CD8-positive, alpha-beta memory T cell (primary cell): ENCODE measurements at regions of chr1 and their contacts with region 1.

Region 1: GRCh38 chr1:169893494-169894362 is at the start of gene SCYL3:
- DNase-seq: peak; percentile 79 to 97 (median 94)
- H3K4me3 ChIP-seq: peak within 1 kb of the TSS; percentile 76
- H3K4me3 Mint-ChIP-seq: peak within 1 kb of the TSS; percentile 82 to 98 (median 91)
- H3K27ac ChIP-seq: peak within 1 kb of the TSS; percentile 96
- H3K27ac Mint-ChIP-seq: peak within 1 kb of the TSS; percentile 99 to 100 (median 99)
- H3K4me1 ChIP-seq: peaks cover 32% of the 10 kb centered on the region
- H3K4me1 Mint-ChIP-seq: peaks cover 44 to 54% (median 51%) of the 10 kb centered on the region in 3 donors
- H3K27me3 ChIP-seq: no peaks in the 10 kb centered on the region
- H3K27me3 Mint-ChIP-seq: peaks cover 4 to 17% of the 10 kb centered on the region in 2 donors
- total RNA-seq, gene SCYL3: 12.7 to 13.1 TPM

Region 2: GRCh38 chr1:169001353-169001752 is 892.4 kb before region 1 on chr1:
- CTCF ChIA-PET with region 1: no interaction called
- POLR2A ChIA-PET with region 1: no interaction called
- DNase-seq: no peak
- H3K4me3 ChIP-seq: no peak overlapping the region
- H3K4me3 Mint-ChIP-seq: no peak overlapping the region
- H3K27ac ChIP-seq: no peak overlapping the region
- H3K27ac Mint-ChIP-seq: no peak overlapping the region
- H3K4me1 ChIP-seq: no peaks in the 10 kb centered on the region
- H3K4me1 Mint-ChIP-seq: no peaks in the 10 kb centered on the region
- H3K27me3 ChIP-seq: no peaks in the 10 kb centered on the region
- H3K27me3 Mint-ChIP-seq: peaks cover 0 to 5% of the 10 kb centered on the region in 2 donors

Region 3: DNA sequence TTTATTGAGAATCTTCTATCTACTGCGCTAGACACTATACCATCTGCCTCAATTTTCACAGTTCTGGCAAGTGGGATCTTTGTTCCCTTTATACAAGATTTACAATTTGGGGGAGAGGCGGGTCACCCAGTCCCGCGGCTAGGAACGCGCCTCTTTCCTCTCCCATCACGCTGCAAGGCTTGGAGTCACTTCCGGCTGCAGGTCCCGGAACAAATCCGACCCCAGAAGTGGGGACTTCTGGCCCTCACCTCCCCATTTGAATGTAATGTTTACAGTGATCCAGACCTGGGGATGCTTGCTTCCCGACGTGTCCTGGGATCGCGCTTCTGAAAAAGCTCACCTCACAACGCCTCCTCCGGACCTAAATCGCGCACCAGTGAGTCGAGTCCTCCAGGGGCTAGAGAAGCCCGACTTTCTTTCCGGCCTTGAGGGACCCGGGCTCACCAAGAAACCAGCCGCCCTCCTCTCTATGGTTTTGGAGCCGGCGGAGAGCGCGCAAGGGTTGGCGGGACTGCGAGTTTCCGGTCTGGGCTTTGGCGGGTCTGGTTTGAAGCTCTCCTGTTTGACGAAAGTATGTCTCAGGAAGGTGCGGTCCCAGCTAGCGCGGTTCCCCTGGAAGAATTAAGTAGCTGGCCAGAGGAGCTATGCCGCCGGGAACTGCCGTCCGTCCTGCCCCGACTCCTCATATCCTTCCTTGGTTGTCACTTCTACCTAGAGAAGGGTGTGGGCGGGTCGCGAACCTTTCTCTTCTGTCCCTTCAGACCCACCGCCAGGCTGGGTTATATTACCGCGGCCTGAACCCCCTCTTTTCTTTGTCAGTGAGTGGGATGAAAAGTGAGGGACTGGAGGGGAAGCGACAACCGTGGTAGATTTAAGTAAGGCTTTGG is 99.0 kb before region 1 on chr1 and contains the start of gene METTL18:
- CTCF ChIA-PET with region 1: interaction called, 4 read pairs
- POLR2A ChIA-PET with region 1: interaction called, 12 read pairs
- DNase-seq: peak; percentile 81 to 94 (median 92)
- H3K4me3 ChIP-seq: peak within 1 kb of the TSS; percentile 98
- H3K4me3 Mint-ChIP-seq: peak within 1 kb of the TSS; percentile 94 to 100 (median 100)
- H3K27ac ChIP-seq: peak within 1 kb of the TSS; percentile 89
- H3K27ac Mint-ChIP-seq: peak within 1 kb of the TSS; percentile 87 to 100 (median 99)
- H3K4me1 ChIP-seq: peaks cover 26% of the 10 kb centered on the region
- H3K4me1 Mint-ChIP-seq: peaks cover 47 to 61% (median 60%) of the 10 kb centered on the region in 3 donors
- H3K27me3 ChIP-seq: no peaks in the 10 kb centered on the region
- H3K27me3 Mint-ChIP-seq: no peaks in the 10 kb centered on the region
- total RNA-seq, gene METTL18: 14.5 to 16.2 TPM

Region 4: GRCh38 chr1:169915150-169915549 is 21.4 kb after region 1 on chr1:
- CTCF ChIA-PET with region 1: no interaction called
- POLR2A ChIA-PET with region 1: no interaction called
- DNase-seq: no peak
- H3K4me3 ChIP-seq: no peak overlapping the region
- H3K4me3 Mint-ChIP-seq: no peak overlapping the region
- H3K27ac ChIP-seq: no peak overlapping the region
- H3K27ac Mint-ChIP-seq: no peak overlapping the region
- H3K4me1 ChIP-seq: no peaks in the 10 kb centered on the region
- H3K4me1 Mint-ChIP-seq: peaks cover 0 to 5% (median 4%) of the 10 kb centered on the region in 3 donors
- H3K27me3 ChIP-seq: no peaks in the 10 kb centered on the region
- H3K27me3 Mint-ChIP-seq: no peaks in the 10 kb centered on the region

Region 5: GRCh38 chr1:170074250-170075157 is 180.8 kb after region 1 on chr1 and contains the start of gene KIFAP3:
- CTCF ChIA-PET with region 1: interaction called, 3 read pairs
- POLR2A ChIA-PET with region 1: interaction called, 12 read pairs
- DNase-seq: peak; percentile 92 to 97 (median 95)
- H3K4me3 ChIP-seq: peak within 1 kb of the TSS; percentile 70
- H3K4me3 Mint-ChIP-seq: peak within 1 kb of the TSS; percentile 85 to 98 (median 91)
- H3K27ac ChIP-seq: peak within 1 kb of the TSS; percentile 66
- H3K27ac Mint-ChIP-seq: peak within 1 kb of the TSS; percentile 81 to 98 (median 94)
- H3K4me1 ChIP-seq: peaks cover 28% of the 10 kb centered on the region
- H3K4me1 Mint-ChIP-seq: peaks cover 53 to 64% (median 59%) of the 10 kb centered on the region in 3 donors
- H3K27me3 ChIP-seq: no peaks in the 10 kb centered on the region
- H3K27me3 Mint-ChIP-seq: no peaks in the 10 kb centered on the region
- total RNA-seq, gene KIFAP3: 23.2 to 23.8 TPM